ENCODE measurements at regions of chr15 and their contacts with region 1.

Region 1: DNA sequence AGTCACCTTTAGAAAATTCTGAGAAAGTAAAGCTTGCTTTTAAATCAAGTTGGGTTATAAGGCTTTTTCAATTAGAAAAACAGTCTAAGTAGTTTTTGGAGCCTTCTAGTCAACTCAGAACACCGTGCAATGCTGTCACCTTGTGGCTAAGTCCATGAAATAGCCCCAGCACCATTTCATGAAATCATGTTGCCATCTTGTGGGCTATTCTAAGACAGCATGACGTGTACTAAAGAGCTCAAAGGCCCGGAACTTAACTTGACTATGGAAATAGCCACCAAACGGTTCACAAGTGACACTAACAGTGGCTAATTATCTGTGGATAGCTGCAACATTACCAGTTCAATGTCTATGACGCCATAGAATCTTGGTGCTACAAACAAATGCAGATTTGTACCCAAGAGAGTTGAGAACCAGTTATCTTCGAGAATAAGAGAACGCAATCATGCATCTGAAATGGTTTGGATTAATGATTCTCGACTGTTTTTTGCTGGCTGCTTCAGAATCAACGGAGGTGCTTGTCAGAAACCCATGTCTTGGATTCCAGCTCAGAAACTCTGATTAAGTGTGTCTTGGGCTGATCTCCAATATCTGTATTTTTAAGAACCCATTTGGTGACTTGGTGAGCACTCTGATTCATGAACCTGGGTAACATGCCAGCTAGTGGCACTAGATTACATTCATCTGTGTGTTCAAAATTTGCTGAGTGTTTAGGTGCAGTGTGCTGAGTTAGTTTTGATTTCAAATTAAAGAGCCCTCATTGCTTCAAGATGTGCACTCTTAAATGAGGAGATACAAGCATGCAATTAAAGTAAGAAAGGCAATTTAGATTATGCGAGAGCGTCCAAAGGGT is 111.2 kb upstream of the MCTP2 start:
- DNase-seq: peak; percentile 51 to 86
- ATAC-seq: peak; percentile 94 to 99
- H3K4me3 ChIP-seq: no peak overlapping the region
- H3K27ac ChIP-seq: no peak overlapping the region
- H3K4me1 ChIP-seq: no peaks in the 10 kb centered on the region
- CTCF ChIP-seq: peak; percentile 96
- EP300 ChIP-seq: no peak
- POLR2A ChIP-seq: no peak
- RAD21 ChIP-seq: peak; percentile 92 to 97

Region 2: DNA sequence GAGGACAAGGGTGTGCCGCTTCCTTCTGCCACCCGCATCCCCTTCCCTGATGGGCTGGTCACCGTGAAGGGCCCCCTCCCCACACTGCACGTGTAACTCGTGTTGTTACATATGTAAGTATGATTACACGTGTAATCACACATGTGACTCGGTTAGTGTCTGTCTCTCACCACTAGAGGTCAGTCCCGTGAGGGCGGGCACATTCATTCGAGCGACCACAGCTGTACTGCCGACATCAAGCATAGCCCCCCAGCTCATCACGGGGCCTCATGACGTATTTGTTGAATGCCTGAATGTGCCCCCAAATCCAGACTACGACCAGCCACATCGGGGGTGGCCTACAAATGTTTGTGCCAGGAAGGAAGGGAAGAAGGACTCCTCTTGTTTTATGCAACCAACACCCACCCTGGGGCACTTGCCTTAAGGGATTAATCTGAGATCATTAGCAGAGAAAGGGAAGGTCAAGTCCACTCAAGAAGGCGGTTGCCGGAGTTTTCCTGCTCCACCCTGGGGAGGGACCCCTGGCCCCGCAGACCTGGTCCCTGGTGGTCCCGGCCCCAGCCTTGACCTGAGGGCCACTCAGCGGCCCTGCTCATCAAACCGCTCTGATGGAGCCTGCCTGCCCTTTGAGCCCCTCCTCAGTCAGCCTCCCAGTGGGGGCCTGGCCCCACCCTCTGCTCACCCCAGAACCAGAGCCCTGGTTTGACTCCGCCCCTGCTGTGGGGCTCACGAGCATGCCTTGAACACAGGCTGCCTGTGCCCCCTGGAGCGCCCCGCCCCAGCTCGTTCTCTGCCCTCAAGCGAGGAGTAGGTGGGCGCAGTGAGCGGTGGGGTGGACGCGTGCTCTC is 1084.0 kb before region 1 on chr15:
- CTCF ChIA-PET with region 1: interaction called, 97 read pairs
- POLR2A ChIA-PET with region 1: no interaction called
- DNase-seq: peak; percentile 61 to 87
- ATAC-seq: peak; percentile 62 to 75
- H3K4me3 ChIP-seq: no peak overlapping the region
- H3K27ac ChIP-seq: 0 out of 6 replicates have a peak overlapping the region, but pooled peaks of 1 of the 2 experiments have one; percentile 18
- H3K4me1 ChIP-seq: no peaks in the 10 kb centered on the region
- CTCF ChIP-seq: peak; percentile 69
- EP300 ChIP-seq: no peak
- POLR2A ChIP-seq: no peak
- RAD21 ChIP-seq: peak; percentile 43 to 46

Region 3: DNA sequence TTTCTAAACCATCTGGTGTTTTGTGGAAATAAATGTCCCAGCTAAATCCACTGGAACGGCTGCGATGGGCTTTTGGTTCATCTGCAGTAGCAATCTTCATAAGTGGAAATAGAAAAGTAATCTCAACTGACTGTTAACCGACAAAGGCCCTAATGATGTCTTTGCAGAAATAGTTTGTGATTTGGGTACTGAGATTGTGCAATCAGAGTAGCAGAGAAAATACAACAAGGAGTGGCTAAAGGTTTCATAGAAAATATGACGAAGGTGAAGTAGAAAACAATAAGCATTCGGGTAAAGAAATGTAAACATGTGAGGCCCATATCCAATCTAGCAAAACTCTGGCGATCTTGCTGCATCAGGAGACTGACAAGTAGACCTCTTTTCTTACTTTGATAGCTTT is 151.4 kb before region 1 on chr15:
- CTCF ChIA-PET with region 1: no interaction called
- POLR2A ChIA-PET with region 1: no interaction called
- DNase-seq: no peak
- ATAC-seq: no peak
- H3K4me3 ChIP-seq: no peak overlapping the region
- H3K27ac ChIP-seq: no peak overlapping the region
- H3K4me1 ChIP-seq: no peaks in the 10 kb centered on the region
- CTCF ChIP-seq: no peak
- EP300 ChIP-seq: no peak
- POLR2A ChIP-seq: no peak
- RAD21 ChIP-seq: no peak

Region 4: GRCh38 chr15:94107652-94108051 is 12.5 kb before region 1 on chr15:
- CTCF ChIA-PET with region 1: interaction called, 12 read pairs
- POLR2A ChIA-PET with region 1: no interaction called
- DNase-seq: no peak
- ATAC-seq: no peak
- H3K4me3 ChIP-seq: no peak overlapping the region
- H3K27ac ChIP-seq: no peak overlapping the region
- H3K4me1 ChIP-seq: no peaks in the 10 kb centered on the region
- CTCF ChIP-seq: no peak
- EP300 ChIP-seq: no peak
- POLR2A ChIP-seq: no peak
- RAD21 ChIP-seq: no peak

Region 5: DNA sequence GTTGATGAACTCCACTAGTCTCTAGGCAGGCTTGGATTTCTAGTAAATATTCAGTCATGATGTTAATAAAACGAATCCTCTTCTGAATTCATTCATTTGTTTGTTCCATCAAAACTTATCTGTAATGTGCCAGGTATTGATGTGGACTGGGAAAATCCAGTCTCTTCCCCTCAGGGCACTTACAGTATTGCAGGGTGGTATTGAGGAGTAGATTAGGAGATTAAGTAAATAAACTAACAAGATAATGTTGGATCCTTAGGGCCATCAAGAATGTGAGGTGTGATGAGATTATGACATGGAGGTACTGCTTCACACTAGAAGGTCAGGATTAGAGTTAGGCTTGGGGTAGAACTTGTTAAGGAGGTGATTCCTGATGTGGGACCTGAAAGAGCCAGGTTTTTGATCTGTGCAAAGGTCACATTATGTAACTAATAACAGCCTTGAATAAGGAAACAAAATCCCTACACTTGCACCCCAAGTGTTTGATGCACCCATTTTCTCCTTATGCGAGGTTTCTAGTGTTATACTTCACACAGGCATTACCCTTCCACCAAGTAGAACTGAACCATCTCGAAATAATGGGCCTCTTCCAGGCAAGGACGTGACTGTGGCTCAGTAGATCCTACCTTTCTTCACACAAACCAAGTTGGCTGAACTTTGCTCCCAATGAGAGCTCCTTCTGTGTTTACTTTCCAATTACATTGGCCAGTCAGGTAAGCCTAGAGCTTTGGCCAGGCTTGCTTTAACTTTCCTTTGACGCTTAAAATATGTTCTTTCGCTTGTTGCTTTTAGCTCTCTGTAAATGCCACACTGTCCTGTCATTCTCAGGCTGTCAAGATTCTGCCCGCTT is 127.9 kb after region 1 on chr15:
- CTCF ChIA-PET with region 1: no interaction called
- POLR2A ChIA-PET with region 1: no interaction called
- DNase-seq: no peak
- ATAC-seq: no peak
- H3K4me3 ChIP-seq: no peak overlapping the region
- H3K27ac ChIP-seq: no peak overlapping the region
- H3K4me1 ChIP-seq: no peaks in the 10 kb centered on the region
- CTCF ChIP-seq: no peak
- EP300 ChIP-seq: no peak
- POLR2A ChIP-seq: no peak
- RAD21 ChIP-seq: no peak

Region 6: DNA sequence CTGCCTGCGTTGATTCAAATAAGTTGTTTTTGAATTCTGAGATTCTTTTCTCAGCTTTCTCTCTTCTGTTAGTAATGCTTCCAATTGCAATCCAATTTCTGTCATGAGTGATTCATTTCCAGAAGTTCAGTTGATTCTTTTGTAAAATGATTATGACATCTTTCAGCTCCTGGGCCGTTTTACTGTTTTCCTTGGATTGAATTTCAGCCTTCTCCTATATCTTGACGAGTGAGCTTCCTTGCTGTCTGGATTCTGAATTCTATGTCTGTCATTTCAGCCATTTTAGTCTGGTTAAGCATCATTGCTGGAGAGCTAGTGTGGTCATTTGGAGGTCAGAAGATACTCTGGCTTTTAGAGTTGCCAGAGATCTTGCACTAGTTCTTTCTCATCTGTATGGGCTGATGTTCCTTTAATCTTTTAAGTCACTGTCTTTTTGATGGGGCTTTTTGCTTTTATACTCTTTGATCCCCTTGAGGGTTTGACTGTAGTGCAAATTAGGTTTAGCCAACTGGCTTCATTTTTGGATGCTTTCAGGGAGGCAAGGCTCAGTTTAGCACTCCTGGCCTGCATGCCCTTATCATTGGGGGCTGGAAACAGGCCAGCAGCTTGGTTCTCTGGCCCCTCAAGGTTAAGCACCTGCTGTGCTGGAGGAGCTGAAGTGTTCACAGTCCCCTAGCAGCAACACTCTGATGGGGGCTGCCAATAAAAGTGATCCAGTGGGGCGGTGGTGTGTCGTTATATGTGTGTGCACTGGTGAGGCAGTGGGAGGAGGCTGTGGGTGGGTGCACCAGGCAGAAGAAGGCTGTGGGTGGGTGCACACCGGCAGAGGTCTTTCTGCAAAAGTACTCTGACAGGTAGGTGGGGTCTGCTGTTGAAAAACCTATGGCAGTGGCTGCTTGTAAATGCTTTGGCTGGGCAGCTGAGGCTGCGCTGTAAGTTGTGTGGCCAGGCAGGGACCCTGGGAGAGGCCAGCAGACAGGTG is 162.4 kb after region 1 on chr15:
- CTCF ChIA-PET with region 1: no interaction called
- POLR2A ChIA-PET with region 1: no interaction called
- DNase-seq: no peak
- ATAC-seq: no peak
- H3K4me3 ChIP-seq: no peak overlapping the region
- H3K27ac ChIP-seq: no peak overlapping the region
- H3K4me1 ChIP-seq: no peaks in the 10 kb centered on the region
- CTCF ChIP-seq: no peak
- EP300 ChIP-seq: no peak
- POLR2A ChIP-seq: no peak
- RAD21 ChIP-seq: no peak